Activated CD4-positive, alpha-beta T cell treated with anti-CD3 and anti-CD28 coated beads, Interleukin-2, amount 10 ng/mL, durations not matched to agents 24 days and 14 days (primary cell): ENCODE measurements at regions of chr1 and their contacts with region 1.

Region 1: GRCh38 chr1:243421784-243422183 is 165.9 kb downstream of the SDCCAG8 start:
- DNase-seq: peak; percentile 89
- H3K4me3 Mint-ChIP-seq: peak overlapping the region; percentile 70
- H3K27ac Mint-ChIP-seq: peak overlapping the region; percentile 55
- H3K4me1 Mint-ChIP-seq: peaks cover 38% of the 10 kb centered on the region
- H3K27me3 Mint-ChIP-seq: no peaks in the 10 kb centered on the region

Region 2: GRCh38 chr1:243409284-243409683 is 12.5 kb before region 1 on chr1:
- intact Hi-C with region 1: loop called (anchors 2 kb)
- DNase-seq: peak; percentile 54
- H3K4me3 Mint-ChIP-seq: no peak overlapping the region
- H3K27ac Mint-ChIP-seq: no peak overlapping the region
- H3K4me1 Mint-ChIP-seq: peaks cover 21% of the 10 kb centered on the region
- H3K27me3 Mint-ChIP-seq: no peaks in the 10 kb centered on the region

Region 3: GRCh38 chr1:243596431-243597062 is 174.8 kb after region 1 on chr1:
- intact Hi-C with region 1: loop called (anchors 2 kb)
- DNase-seq: peak; percentile 81
- H3K4me3 Mint-ChIP-seq: peak overlapping the region; percentile 43
- H3K27ac Mint-ChIP-seq: peak overlapping the region; percentile 87
- H3K4me1 Mint-ChIP-seq: peaks cover 24% of the 10 kb centered on the region
- H3K27me3 Mint-ChIP-seq: no peaks in the 10 kb centered on the region

Region 4: DNA sequence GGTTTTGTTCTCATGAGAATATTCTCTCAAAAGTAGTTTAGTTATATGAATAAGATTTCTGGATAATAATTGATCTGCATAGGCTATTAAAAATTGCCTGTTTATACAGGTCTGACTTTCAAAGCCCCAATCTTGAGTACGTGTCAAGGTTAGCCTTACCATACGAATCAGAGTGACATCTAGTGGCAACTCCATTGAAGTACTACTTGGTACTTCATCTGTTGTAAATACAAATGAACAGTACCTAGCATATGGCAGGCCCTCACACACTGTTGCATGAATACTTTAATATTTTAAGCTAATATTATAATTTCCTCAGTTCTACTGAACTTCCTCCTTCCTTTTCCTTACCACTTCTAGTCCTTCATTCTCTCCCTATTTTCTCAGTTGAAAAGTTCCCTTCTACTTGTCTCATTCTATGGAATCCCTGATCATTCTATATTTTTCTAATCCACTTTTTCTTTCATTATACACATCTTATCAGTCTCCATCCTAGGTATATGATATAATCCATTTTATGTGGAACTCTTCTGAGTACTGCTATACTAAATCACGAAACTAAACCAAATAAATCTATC is 327.0 kb after region 1 on chr1:
- intact Hi-C with region 1: loop called (anchors 10 kb)
- DNase-seq: peak; percentile 79
- H3K4me3 Mint-ChIP-seq: no peak overlapping the region
- H3K27ac Mint-ChIP-seq: no peak overlapping the region
- H3K4me1 Mint-ChIP-seq: peaks cover 2% of the 10 kb centered on the region
- H3K27me3 Mint-ChIP-seq: no peaks in the 10 kb centered on the region

Region 5: DNA sequence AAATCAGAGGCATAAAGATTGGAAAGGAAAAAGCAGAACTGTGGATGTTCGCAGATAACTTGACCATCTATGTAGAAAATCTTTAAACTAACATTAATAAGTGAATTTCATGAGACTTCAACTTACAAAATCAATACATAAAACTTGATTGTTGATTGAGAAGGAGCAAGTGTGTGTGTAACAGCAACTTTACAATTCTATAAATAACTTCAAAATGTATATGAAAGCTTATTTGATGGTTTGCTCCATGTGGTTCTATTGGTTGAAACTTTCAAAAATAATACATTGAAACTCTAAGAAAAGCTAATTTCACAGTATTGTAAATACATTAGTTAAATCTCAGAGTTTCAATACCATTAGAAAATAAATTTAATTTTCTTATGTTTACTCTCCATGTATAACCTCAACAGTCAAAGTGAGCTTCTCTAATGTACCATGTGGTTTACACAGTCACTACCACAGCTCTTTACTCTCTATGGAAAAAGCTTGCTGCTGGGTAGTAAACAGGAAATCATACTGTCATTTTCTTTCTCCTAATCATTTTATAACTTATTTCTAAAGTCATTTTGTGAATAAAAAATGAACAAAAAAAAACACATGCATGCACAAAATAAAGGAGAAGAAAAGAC is 416.2 kb after region 1 on chr1:
- intact Hi-C with region 1: loop called (anchors 5 kb)
- DNase-seq: peak; percentile 67
- H3K4me3 Mint-ChIP-seq: peak overlapping the region; percentile 32
- H3K27ac Mint-ChIP-seq: peak overlapping the region; percentile 83
- H3K4me1 Mint-ChIP-seq: peaks cover 22% of the 10 kb centered on the region
- H3K27me3 Mint-ChIP-seq: no peaks in the 10 kb centered on the region